ENCODE measurements at regions of chr6 and their contacts with region 1.

Region 1: GRCh38 chr6:150813319-150813992 is 52.0 kb upstream of the MTHFD1L start:
- DNase-seq: peak; percentile 22
- ATAC-seq: peak; percentile 79
- H3K4me3 Mint-ChIP-seq: peak overlapping the region; percentile 69
- H3K27ac Mint-ChIP-seq: peak overlapping the region; percentile 99
- H3K4me1 Mint-ChIP-seq: peaks cover 32% of the 10 kb centered on the region
- H3K27me3 Mint-ChIP-seq: no peaks in the 10 kb centered on the region
- CTCF ChIP-seq: no peak

Region 2: DNA sequence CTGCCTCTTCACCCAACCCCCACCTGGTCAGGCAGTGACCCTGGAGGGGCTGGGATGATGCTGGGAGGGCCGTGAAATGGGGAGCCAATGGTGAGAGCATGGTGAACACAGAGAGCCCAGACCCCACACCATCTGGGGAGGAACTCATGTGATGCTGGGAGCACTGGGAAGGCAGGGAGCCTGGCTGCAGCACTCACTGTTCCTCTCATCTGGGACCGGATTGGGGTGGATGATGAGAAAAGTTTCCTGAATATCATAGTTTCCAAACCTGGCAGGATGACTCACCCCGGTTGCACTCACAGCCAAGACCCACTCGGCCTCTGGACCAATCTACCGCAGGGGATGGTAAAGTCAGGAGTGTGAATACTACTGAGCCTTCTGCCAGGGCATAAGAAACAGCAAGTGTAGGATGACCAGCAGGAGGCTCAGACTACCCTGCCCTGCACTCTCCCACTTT is 827.9 kb before region 1 on chr6:
- CTCF ChIA-PET with region 1: no interaction called
- POLR2A ChIA-PET with region 1: no interaction called
- intact Hi-C with region 1: no loop called
- DNase-seq: no peak
- ATAC-seq: no peak
- H3K4me3 Mint-ChIP-seq: no peak overlapping the region
- H3K27ac Mint-ChIP-seq: no peak overlapping the region
- H3K4me1 Mint-ChIP-seq: peaks cover 14% of the 10 kb centered on the region
- H3K27me3 Mint-ChIP-seq: peaks cover 67% of the 10 kb centered on the region
- CTCF ChIP-seq: no peak

Region 3: DNA sequence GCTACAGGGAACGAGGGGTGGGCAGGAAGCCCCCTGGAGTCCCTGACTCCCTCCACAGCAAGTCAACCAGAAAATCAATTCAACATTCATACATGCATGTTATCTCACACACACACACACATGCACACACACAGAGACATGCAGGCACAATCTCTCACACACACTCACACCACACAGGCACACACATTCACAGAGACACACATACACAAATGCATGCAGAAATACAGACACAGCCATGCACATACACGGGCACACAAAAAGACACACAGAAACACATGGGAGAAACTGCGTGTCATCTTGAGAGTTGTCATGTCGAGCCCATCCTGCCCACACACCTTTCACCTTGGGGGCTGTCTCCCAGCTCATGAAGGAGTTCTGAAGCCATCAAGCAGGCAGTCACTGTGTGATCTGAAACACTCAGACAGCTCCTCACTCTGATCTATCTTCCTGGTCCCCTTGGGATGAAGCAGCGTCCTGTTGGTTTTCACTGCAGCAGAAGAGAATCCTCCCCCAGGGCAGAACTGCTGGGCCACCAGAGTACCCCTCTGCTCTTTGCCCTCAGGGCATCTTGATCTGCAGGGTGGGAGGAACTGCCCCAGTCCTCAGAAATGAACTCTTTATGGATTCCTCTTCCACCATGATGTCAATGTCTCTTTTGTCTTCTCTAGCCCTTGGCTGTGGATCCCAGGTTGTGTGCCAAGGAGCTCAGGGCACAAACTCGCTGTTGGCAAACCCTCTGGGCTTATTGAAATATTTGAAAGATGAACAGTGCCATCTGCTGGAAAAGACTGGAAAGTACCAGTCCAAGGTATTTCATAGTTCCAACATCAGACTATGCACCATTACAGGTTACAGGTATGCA is 796.9 kb before region 1 on chr6:
- CTCF ChIA-PET with region 1: no interaction called
- POLR2A ChIA-PET with region 1: no interaction called
- intact Hi-C with region 1: loop called (anchors 5 kb)
- DNase-seq: peak; percentile 36
- ATAC-seq: peak; percentile 85
- H3K4me3 Mint-ChIP-seq: no peak overlapping the region
- H3K27ac Mint-ChIP-seq: no peak overlapping the region
- H3K4me1 Mint-ChIP-seq: peaks cover 16% of the 10 kb centered on the region
- H3K27me3 Mint-ChIP-seq: peaks cover 62% of the 10 kb centered on the region
- CTCF ChIP-seq: no peak

Region 4: GRCh38 chr6:150079604-150080003 is 733.9 kb before region 1 on chr6:
- CTCF ChIA-PET with region 1: interaction called, 16 read pairs
- POLR2A ChIA-PET with region 1: no interaction called
- intact Hi-C with region 1: loop called (anchors 1 kb)
- DNase-seq: no peak
- ATAC-seq: no peak
- H3K4me3 Mint-ChIP-seq: no peak overlapping the region
- H3K27ac Mint-ChIP-seq: no peak overlapping the region
- H3K4me1 Mint-ChIP-seq: peaks cover 2% of the 10 kb centered on the region
- H3K27me3 Mint-ChIP-seq: peaks cover 48% of the 10 kb centered on the region
- CTCF ChIP-seq: no peak

Region 5: DNA sequence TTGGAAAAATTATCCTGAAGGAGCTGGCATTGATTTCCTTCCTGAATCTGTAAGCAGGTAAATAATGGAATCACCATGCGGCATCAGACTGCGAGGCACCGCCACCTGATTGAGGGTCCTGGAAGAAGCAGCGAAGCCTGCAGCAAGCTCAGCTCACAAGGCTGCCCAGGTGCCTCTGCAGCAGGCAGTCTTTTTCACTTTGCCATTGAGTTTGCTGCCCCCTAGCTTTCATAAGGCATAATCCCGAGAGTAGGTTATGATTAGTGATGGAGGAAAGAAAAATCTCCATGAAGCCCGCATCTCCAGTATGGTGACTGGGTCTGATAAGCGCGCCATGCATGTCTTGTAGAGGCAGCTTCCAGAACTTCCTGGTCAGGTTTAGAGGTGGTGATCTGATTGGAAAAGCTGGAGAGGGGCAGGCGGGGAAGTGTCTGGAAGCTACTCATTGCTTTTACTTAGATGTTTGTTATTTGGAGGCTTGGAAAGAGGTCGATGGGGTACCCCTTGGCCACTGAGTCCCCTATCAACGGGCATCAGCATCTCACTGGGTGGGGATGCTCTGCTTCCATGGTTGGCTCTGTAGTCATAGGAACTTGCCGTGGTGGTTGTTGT is 418.0 kb before region 1 on chr6:
- CTCF ChIA-PET with region 1: interaction called, 18 read pairs
- POLR2A ChIA-PET with region 1: no interaction called
- intact Hi-C with region 1: no loop called
- DNase-seq: no peak
- ATAC-seq: peak; percentile 79
- H3K4me3 Mint-ChIP-seq: no peak overlapping the region
- H3K27ac Mint-ChIP-seq: no peak overlapping the region
- H3K4me1 Mint-ChIP-seq: no peaks in the 10 kb centered on the region
- H3K27me3 Mint-ChIP-seq: peaks cover 17% of the 10 kb centered on the region
- CTCF ChIP-seq: no peak

Region 6: DNA sequence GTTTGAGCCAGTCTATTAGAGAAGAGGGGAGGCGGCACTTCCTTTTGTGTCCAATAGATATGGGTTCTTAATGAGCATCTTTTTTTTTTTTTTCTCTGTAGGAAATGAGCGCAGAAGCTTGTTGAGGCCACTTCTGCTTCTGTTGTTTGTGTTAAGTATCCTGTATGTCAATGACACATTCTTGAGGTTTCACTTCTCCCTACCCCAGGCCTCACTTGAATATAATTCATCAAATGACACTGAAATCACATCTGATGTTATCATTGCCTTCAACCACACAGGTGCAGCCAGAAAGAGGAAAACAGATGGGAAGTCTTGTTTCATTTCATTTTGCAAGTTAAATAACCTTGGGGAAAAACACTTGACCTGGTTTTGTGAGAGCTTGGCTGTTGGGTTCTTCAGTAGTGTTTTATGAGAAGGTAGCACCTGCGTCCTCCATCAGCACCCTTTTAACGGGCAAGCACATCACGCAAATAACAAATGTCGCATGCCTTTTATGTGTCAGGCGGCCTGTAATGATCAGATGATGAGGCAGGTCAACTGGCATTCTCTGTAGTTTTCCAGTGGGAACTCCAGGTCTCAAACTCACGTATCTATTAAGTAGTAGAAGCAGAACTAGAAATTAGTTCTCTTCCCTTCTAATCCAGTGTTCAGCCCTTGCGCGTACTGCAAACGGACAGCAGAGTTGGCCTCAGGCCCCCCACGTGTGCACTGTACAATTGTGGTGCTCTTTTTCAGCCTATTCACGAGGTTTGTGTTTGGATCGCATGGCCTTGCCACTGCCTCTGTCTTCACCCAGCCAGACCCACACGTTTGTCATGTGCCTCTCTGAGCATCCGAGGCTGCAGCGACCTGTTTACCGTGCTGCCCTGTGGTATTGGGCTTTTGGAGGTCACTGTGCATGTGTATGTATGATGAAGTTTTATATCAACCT is 190.2 kb before region 1 on chr6:
- CTCF ChIA-PET with region 1: no interaction called
- POLR2A ChIA-PET with region 1: interaction called, 10 read pairs
- intact Hi-C with region 1: loop called (anchors 1 kb)
- DNase-seq: peak; percentile 40
- ATAC-seq: peak; percentile 87
- H3K4me3 Mint-ChIP-seq: peak overlapping the region; percentile 19
- H3K27ac Mint-ChIP-seq: peak overlapping the region; percentile 94
- H3K4me1 Mint-ChIP-seq: peaks cover 97% of the 10 kb centered on the region
- H3K27me3 Mint-ChIP-seq: no peaks in the 10 kb centered on the region
- CTCF ChIP-seq: no peak

Region 7: DNA sequence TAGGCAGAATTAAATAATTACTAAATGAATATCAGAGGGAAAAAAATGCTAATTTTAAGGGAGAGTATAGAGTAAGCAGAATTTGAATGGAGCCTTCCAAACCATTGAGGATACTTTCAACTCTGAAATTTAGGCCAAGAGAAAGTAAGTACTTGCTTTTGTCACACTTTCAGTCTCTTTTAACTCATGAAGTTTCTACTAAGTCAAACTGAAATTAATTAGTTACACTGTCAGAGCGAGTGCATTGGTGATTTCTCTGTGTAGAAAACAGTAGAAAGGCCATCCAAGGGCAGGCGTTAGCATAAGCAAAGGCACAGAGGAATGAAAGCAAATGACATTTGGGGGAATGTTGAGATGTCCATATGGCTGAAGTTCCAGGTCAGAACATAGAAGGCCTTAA is 120.9 kb before region 1 on chr6:
- CTCF ChIA-PET with region 1: no interaction called
- POLR2A ChIA-PET with region 1: no interaction called
- intact Hi-C with region 1: loop called (anchors 5 kb)
- DNase-seq: no peak
- ATAC-seq: no peak
- H3K4me3 Mint-ChIP-seq: no peak overlapping the region
- H3K27ac Mint-ChIP-seq: peak overlapping the region; percentile 71
- H3K4me1 Mint-ChIP-seq: peaks cover 94% of the 10 kb centered on the region
- H3K27me3 Mint-ChIP-seq: no peaks in the 10 kb centered on the region
- CTCF ChIP-seq: no peak

Region 8: DNA sequence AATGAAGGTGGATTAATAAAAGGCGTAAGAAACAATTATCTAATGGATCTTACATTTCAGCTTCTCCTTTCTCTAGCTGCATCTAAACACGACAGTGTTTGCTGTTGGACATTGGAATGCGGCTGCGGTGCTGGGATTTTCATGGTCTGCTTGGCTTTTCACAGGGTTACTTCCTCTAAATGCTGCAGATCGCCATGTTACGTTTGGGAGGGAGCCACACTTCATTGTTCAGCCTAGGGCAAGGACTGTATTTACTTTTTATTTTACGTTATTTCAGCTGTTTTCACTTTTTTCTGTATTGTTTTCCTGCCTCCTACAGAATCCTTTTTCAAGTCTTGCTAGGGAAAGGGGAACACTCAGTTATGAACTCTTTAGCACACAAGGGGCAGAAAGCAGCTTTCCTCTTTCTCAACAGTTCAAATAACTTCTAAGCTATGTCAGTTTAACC is 45.9 kb before region 1 on chr6:
- CTCF ChIA-PET with region 1: interaction called, 7 read pairs
- POLR2A ChIA-PET with region 1: no interaction called
- intact Hi-C with region 1: loop called (anchors 5 kb)
- DNase-seq: no peak
- ATAC-seq: no peak
- H3K4me3 Mint-ChIP-seq: no peak overlapping the region
- H3K27ac Mint-ChIP-seq: peak overlapping the region; percentile 32
- H3K4me1 Mint-ChIP-seq: peaks cover 50% of the 10 kb centered on the region
- H3K27me3 Mint-ChIP-seq: no peaks in the 10 kb centered on the region
- CTCF ChIP-seq: no peak

Region 9: GRCh38 chr6:150881911-150882481 is 68.5 kb after region 1 on chr6:
- CTCF ChIA-PET with region 1: no interaction called
- POLR2A ChIA-PET with region 1: no interaction called
- intact Hi-C with region 1: no loop called
- DNase-seq: no peak
- ATAC-seq: no peak
- H3K4me3 Mint-ChIP-seq: no peak overlapping the region
- H3K27ac Mint-ChIP-seq: no peak overlapping the region
- H3K4me1 Mint-ChIP-seq: peaks cover under 1% of the 10 kb centered on the region
- H3K27me3 Mint-ChIP-seq: no peaks in the 10 kb centered on the region
- CTCF ChIP-seq: no peak

Region 10: DNA sequence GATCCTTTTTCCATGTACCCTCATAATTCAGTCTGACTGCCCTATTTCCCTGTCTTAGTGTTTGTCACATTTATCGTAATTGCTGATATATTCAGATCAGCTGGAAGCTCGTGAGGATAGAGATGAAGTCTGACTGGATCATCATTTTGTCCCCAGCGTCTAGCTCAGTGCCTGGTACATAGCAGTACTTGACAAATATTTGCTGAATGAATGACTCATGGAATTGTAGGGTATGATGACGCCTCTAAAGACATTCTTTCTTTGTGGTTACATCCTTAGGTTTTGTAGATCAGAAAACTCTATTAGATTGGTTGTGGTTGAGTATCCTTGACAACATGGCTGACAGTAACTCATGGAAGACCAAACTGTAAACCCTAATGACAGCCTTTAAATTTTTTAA is 120.9 kb after region 1 on chr6:
- CTCF ChIA-PET with region 1: no interaction called
- POLR2A ChIA-PET with region 1: no interaction called
- intact Hi-C with region 1: no loop called
- DNase-seq: no peak
- ATAC-seq: no peak
- H3K4me3 Mint-ChIP-seq: no peak overlapping the region
- H3K27ac Mint-ChIP-seq: no peak overlapping the region
- H3K4me1 Mint-ChIP-seq: no peaks in the 10 kb centered on the region
- H3K27me3 Mint-ChIP-seq: no peaks in the 10 kb centered on the region
- CTCF ChIP-seq: no peak